CD8-positive, alpha-beta T cell (primary cell): ENCODE measurements at regions of chr14 and their contacts with region 1.

Region 1: DNA sequence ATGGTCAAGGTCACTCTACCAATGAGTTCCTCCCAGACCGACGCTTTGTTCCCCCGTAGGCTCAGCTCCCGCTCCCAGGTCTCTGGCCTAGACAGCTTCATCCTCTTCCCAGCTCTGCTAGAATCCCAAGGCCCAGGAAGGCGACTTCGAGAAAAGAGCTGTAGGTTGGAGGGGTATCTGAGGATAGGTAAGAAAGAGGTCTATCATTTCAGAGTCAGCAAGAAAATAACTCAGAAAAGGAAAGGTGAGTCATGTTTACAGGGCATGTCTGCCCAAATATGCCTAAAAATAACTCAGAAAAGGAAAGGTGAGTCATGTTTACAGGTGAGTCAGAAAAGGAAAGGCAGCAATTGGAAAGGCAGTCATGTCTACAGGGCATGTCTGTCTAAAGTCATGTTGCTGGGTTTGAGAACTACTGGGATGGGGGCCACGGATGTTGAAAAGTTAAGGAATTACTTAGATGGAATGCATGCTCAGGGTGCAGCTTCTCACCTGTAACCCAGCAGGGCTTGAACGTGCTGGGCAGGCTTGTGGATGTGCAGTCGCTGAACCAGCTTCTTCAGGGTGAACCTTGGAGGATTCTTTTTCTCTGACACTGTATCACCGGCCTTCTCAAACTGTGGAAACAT is 12.2 kb downstream of the TEP1 start:
- DNase-seq: no peak
- ATAC-seq: no peak
- H3K4me3 ChIP-seq: no peak overlapping the region
- H3K4me3 Mint-ChIP-seq: no peak overlapping the region
- H3K27ac ChIP-seq: no peak overlapping the region
- H3K27ac Mint-ChIP-seq: peak overlapping the region; percentile 76
- H3K4me1 ChIP-seq: no peaks in the 10 kb centered on the region
- H3K4me1 Mint-ChIP-seq: peaks cover 12% of the 10 kb centered on the region
- H3K27me3 ChIP-seq: no peaks in the 10 kb centered on the region
- H3K27me3 Mint-ChIP-seq: no peaks in the 10 kb centered on the region
- CTCF ChIP-seq: no peak

Region 2: DNA sequence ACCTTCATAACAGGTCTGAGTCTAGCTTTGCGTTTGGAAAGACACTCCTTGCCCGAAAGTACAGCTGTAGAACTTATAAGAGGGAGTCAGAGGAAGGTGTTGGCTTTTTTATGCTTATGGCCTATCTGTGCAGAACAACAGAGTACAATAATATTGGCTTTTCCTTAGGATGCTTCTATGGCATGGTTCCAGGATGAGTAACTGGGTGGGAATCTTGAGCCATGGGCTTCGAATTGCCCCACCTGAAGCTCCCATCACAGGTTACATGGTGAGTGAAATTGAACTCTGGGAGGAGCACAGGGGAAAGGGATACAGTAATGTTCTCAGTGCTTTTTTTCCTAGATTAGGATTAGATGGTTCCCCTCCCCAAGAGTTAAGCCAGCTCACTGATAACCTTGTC is 44.7 kb before region 1 on chr14:
- CTCF ChIA-PET with region 1: no interaction called
- POLR2A ChIA-PET with region 1: no interaction called
- intact Hi-C with region 1: loop called in 1 of 2 experiments (anchors 5 kb)
- DNase-seq: no peak
- ATAC-seq: no peak
- H3K4me3 ChIP-seq: no peak overlapping the region
- H3K4me3 Mint-ChIP-seq: no peak overlapping the region
- H3K27ac ChIP-seq: no peak overlapping the region
- H3K27ac Mint-ChIP-seq: peak overlapping the region; percentile 23
- H3K4me1 ChIP-seq: no peaks in the 10 kb centered on the region
- H3K4me1 Mint-ChIP-seq: no peaks in the 10 kb centered on the region
- H3K27me3 ChIP-seq: no peaks in the 10 kb centered on the region
- H3K27me3 Mint-ChIP-seq: no peaks in the 10 kb centered on the region
- CTCF ChIP-seq: no peak